Ovary (tissue), 10 donors: ENCODE measurements at regions of chr10 and their contacts with region 1.

Region 1: DNA sequence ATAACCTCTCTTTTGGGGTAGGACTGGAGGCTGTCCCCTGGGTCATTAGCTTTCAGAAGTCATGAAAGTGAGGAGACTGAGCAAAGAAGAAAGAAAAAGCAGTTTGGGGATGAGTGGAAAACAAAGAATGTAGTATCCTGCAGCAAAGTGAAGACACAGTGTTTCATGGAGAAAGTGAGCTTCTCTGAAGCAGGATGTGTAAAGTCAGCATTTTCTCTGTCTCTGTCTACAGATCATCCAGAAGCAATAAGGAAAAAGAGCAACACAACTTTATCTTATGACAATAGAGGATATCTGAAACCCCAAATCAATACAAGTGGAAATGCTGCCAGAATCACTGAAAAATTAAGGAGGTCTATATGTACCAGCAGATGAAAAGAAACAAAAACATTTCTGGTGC is 28.4 kb upstream of the ZNF248 start:
- DNase-seq: no peak
- H3K4me3 ChIP-seq: no peak overlapping the region
- H3K27ac ChIP-seq: no peak overlapping the region
- H3K4me1 ChIP-seq: no peaks in the 10 kb centered on the region
- H3K27me3 ChIP-seq: no peaks in the 10 kb centered on the region
- CTCF ChIP-seq: no peak
- EP300 ChIP-seq: no peak
- POLR2A ChIP-seq: no peak

Region 2: GRCh38 chr10:37831495-37832333 is 54.1 kb before region 1 on chr10:
- intact Hi-C with region 1: loop called in 1 of 4 experiments (anchors 10 kb)
- DNase-seq: no peak
- H3K4me3 ChIP-seq: no peak overlapping the region
- H3K27ac ChIP-seq: no peak overlapping the region
- H3K4me1 ChIP-seq: no peaks in the 10 kb centered on the region
- H3K27me3 ChIP-seq: no peaks in the 10 kb centered on the region
- CTCF ChIP-seq: no peak
- EP300 ChIP-seq: no peak
- POLR2A ChIP-seq: no peak

Region 3: DNA sequence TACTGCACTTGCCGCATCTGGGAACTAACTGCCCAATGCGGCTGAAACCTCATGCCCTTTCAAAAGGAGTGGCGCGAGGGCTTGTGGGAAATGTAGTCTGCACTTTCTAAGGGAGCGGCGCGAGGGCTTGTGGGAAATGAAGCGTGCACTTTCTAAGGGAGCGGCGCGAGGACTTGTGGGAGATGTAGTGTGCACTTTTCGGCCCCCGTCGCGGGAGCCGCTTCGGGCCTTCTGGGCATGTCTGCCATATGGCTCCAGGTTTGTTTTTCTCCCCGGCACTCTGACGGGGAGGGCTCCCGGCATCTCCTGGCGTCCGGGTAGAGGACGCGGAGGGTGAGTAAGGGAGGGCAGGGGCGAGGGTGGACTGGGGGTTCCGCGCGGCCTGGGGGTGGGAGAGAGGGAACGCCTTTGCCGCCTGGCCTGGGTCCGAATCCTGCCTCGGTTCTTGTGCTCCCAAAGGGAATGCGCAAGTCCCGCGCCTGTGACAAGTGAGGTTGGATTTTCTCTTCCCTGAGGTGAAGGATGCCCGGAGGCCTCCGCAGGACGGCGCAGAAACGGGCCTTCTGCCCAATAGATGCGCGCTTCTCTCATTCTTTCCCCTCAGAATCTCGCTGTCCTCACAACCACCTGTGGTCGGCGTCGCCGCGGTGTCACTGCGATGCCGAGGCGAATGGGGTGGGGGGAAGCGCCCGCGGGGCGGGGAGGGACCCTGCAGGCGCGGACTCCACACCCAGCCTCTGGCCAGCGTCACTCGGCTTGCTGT is 208.5 kb after region 1 on chr10 and contains the start of gene ZNF37A:
- intact Hi-C with region 1: no loop called
- DNase-seq: peak; percentile 89 to 94 (median 90)
- H3K4me3 ChIP-seq: peak within 1 kb of the TSS; percentile 95
- H3K27ac ChIP-seq: peak within 1 kb of the TSS; percentile 17 to 81
- H3K4me1 ChIP-seq: peaks cover 5% of the 10 kb centered on the region
- H3K27me3 ChIP-seq: no peaks in the 10 kb centered on the region
- CTCF ChIP-seq: no peak
- EP300 ChIP-seq: no peak
- POLR2A ChIP-seq: no peak
- total RNA-seq, gene ZNF37A: 17.9 to 26.8 (median 21.6) TPM